ENCODE measurements at regions of chr1 and their contacts with region 1.

Region 1: GRCh38 chr1:181142096-181142958 is 53.8 kb downstream of the IER5 start:
- DNase-seq: peak; percentile 78 to 84 (median 81)
- H3K4me3 ChIP-seq: no peak overlapping the region
- H3K4me3 Mint-ChIP-seq: peak overlapping the region in 4 of 8 donors; percentile 4 to 26 (median 14)
- H3K27ac ChIP-seq: no peak overlapping the region
- H3K27ac Mint-ChIP-seq: peak overlapping the region in 4 of 7 donors; percentile 1 to 61 (median 33)
- H3K4me1 ChIP-seq: peaks cover 42% of the 10 kb centered on the region
- H3K4me1 Mint-ChIP-seq: peaks cover 19 to 51% (median 34%) of the 10 kb centered on the region in 4 donors
- H3K27me3 ChIP-seq: no peaks in the 10 kb centered on the region
- H3K27me3 Mint-ChIP-seq: peaks cover 0 to 2% of the 10 kb centered on the region in 2 donors

Region 2: GRCh38 chr1:180881806-180882509 is 260.4 kb before region 1 on chr1:
- CTCF ChIA-PET with region 1: interaction called, 6 read pairs
- POLR2A ChIA-PET with region 1: no interaction called
- intact Hi-C with region 1: loop called (anchors 1 kb)
- DNase-seq: peak in 1 of 5 donors; percentile 4
- H3K4me3 ChIP-seq: no peak overlapping the region
- H3K4me3 Mint-ChIP-seq: no peak overlapping the region
- H3K27ac ChIP-seq: no peak overlapping the region
- H3K27ac Mint-ChIP-seq: no peak overlapping the region
- H3K4me1 ChIP-seq: no peaks in the 10 kb centered on the region
- H3K4me1 Mint-ChIP-seq: no peaks in the 10 kb centered on the region
- H3K27me3 ChIP-seq: no peaks in the 10 kb centered on the region
- H3K27me3 Mint-ChIP-seq: no peaks in the 10 kb centered on the region

Region 3: GRCh38 chr1:180898441-180899219 is 243.7 kb before region 1 on chr1:
- CTCF ChIA-PET with region 1: no interaction called
- POLR2A ChIA-PET with region 1: no interaction called
- intact Hi-C with region 1: no loop called
- DNase-seq: no peak
- H3K4me3 ChIP-seq: no peak overlapping the region
- H3K4me3 Mint-ChIP-seq: no peak overlapping the region
- H3K27ac ChIP-seq: no peak overlapping the region
- H3K27ac Mint-ChIP-seq: no peak overlapping the region
- H3K4me1 ChIP-seq: peaks cover under 1% of the 10 kb centered on the region
- H3K4me1 Mint-ChIP-seq: peaks cover 3% of the 10 kb centered on the region in 4 donors
- H3K27me3 ChIP-seq: no peaks in the 10 kb centered on the region
- H3K27me3 Mint-ChIP-seq: peaks cover 3 to 9% of the 10 kb centered on the region in 2 donors

Region 4: GRCh38 chr1:181044449-181044966 is 97.8 kb before region 1 on chr1:
- CTCF ChIA-PET with region 1: interaction called, 99 read pairs
- POLR2A ChIA-PET with region 1: interaction called, 9 read pairs
- intact Hi-C with region 1: no loop called
- DNase-seq: peak in 2 of 5 donors; percentile 19 to 62
- H3K4me3 ChIP-seq: no peak overlapping the region
- H3K4me3 Mint-ChIP-seq: no peak overlapping the region
- H3K27ac ChIP-seq: no peak overlapping the region
- H3K27ac Mint-ChIP-seq: peak overlapping the region; percentile 36 to 85 (median 77)
- H3K4me1 ChIP-seq: peaks cover 22% of the 10 kb centered on the region
- H3K4me1 Mint-ChIP-seq: peaks cover 21 to 42% (median 28%) of the 10 kb centered on the region in 4 donors
- H3K27me3 ChIP-seq: no peaks in the 10 kb centered on the region
- H3K27me3 Mint-ChIP-seq: no peaks in the 10 kb centered on the region

Region 5: GRCh38 chr1:181088079-181089016 is 54.0 kb before region 1 on chr1 and contains the start of gene IER5:
- CTCF ChIA-PET with region 1: interaction called, 311 read pairs
- POLR2A ChIA-PET with region 1: interaction called, 128 read pairs
- intact Hi-C with region 1: loop called (anchors 1 kb)
- DNase-seq: peak; percentile 93 to 95 (median 95)
- H3K4me3 ChIP-seq: peak within 1 kb of the TSS; percentile 68 to 69
- H3K4me3 Mint-ChIP-seq: peak within 1 kb of the TSS; percentile 98 to 100 (median 99)
- H3K27ac ChIP-seq: peak within 1 kb of the TSS; percentile 100
- H3K27ac Mint-ChIP-seq: peak within 1 kb of the TSS; percentile 96 to 99 (median 99)
- H3K4me1 ChIP-seq: peaks cover 40% of the 10 kb centered on the region
- H3K4me1 Mint-ChIP-seq: peaks cover 29 to 63% (median 40%) of the 10 kb centered on the region in 4 donors
- H3K27me3 ChIP-seq: no peaks in the 10 kb centered on the region
- H3K27me3 Mint-ChIP-seq: no peaks in the 10 kb centered on the region
- total RNA-seq, gene IER5: 28.0 to 29.3 TPM

Region 6: GRCh38 chr1:181112071-181112929 is 30.0 kb before region 1 on chr1:
- CTCF ChIA-PET with region 1: interaction called, 38 read pairs
- POLR2A ChIA-PET with region 1: interaction called, 31 read pairs
- intact Hi-C with region 1: no loop called
- DNase-seq: no peak
- H3K4me3 ChIP-seq: no peak overlapping the region
- H3K4me3 Mint-ChIP-seq: no peak overlapping the region
- H3K27ac ChIP-seq: no peak overlapping the region
- H3K27ac Mint-ChIP-seq: peak overlapping the region in 1 of 7 donors; percentile 31
- H3K4me1 ChIP-seq: no peaks in the 10 kb centered on the region
- H3K4me1 Mint-ChIP-seq: peaks cover 2 to 12% (median 5%) of the 10 kb centered on the region in 4 donors
- H3K27me3 ChIP-seq: no peaks in the 10 kb centered on the region
- H3K27me3 Mint-ChIP-seq: no peaks in the 10 kb centered on the region

Region 7: GRCh38 chr1:181152892-181153633 is 10.7 kb after region 1 on chr1:
- CTCF ChIA-PET with region 1: interaction called, 262 read pairs
- POLR2A ChIA-PET with region 1: interaction called, 71 read pairs
- intact Hi-C with region 1: no loop called
- DNase-seq: no peak
- H3K4me3 ChIP-seq: no peak overlapping the region
- H3K4me3 Mint-ChIP-seq: no peak overlapping the region
- H3K27ac ChIP-seq: no peak overlapping the region
- H3K27ac Mint-ChIP-seq: peak overlapping the region in 2 of 7 donors; percentile 23 to 62
- H3K4me1 ChIP-seq: peaks cover 56% of the 10 kb centered on the region
- H3K4me1 Mint-ChIP-seq: peaks cover 37 to 61% (median 49%) of the 10 kb centered on the region in 4 donors
- H3K27me3 ChIP-seq: no peaks in the 10 kb centered on the region
- H3K27me3 Mint-ChIP-seq: no peaks in the 10 kb centered on the region